T-cell (primary cell): ENCODE measurements at regions of chr22 and their contacts with region 1.

Region 1: GRCh38 chr22:30423982-30424963 is 1.3 kb upstream of the MTFP1 start:
- DNase-seq: peak; percentile 91 to 100 (median 98)
- ATAC-seq: peak; percentile 86 to 92 (median 89)
- H3K4me3 ChIP-seq: peak overlapping the region; percentile 33 to 65
- H3K4me3 Mint-ChIP-seq: peak overlapping the region; percentile 92 to 97 (median 95)
- H3K27ac ChIP-seq: peak overlapping the region; percentile 86
- H3K27ac Mint-ChIP-seq: peak overlapping the region; percentile 96 to 99
- H3K4me1 ChIP-seq: peaks cover 16 to 52% of the 10 kb centered on the region in 2 experiments
- H3K4me1 Mint-ChIP-seq: peaks cover 55 to 61% (median 56%) of the 10 kb centered on the region in 3 donors
- H3K27me3 ChIP-seq: no peaks in the 10 kb centered on the region
- H3K27me3 Mint-ChIP-seq: no peaks in the 10 kb centered on the region

Region 2: GRCh38 chr22:30386960-30387827 is 37.1 kb before region 1 on chr22 and contains the start of gene RNF215:
- CTCF ChIA-PET with region 1: interaction called, 6 to 10 read pairs
- POLR2A ChIA-PET with region 1: no interaction called
- DNase-seq: peak; percentile 41 to 91 (median 68)
- ATAC-seq: peak; percentile 85 to 89 (median 86)
- H3K4me3 ChIP-seq: peak within 1 kb of the TSS; percentile 35 to 53
- H3K4me3 Mint-ChIP-seq: peak within 1 kb of the TSS; percentile 66 to 77 (median 73)
- H3K27ac ChIP-seq: no peak within 1 kb of the TSS
- H3K27ac Mint-ChIP-seq: peak within 1 kb of the TSS; percentile 49 to 68
- H3K4me1 ChIP-seq: peaks cover 3 to 22% of the 10 kb centered on the region in 2 experiments
- H3K4me1 Mint-ChIP-seq: peaks cover 15 to 24% (median 20%) of the 10 kb centered on the region in 3 donors
- H3K27me3 ChIP-seq: peaks cover 0 to 4% of the 10 kb centered on the region in 2 experiments
- H3K27me3 Mint-ChIP-seq: no peaks in the 10 kb centered on the region
- total RNA-seq, gene RNF215: 6.2 to 8.4 (median 6.3) TPM

Region 3: GRCh38 chr22:30396871-30397655 is 27.2 kb before region 1 on chr22 and contains the start of gene SEC14L2:
- CTCF ChIA-PET with region 1: interaction called, 7 to 10 read pairs
- POLR2A ChIA-PET with region 1: interaction called, 9 to 21 read pairs
- DNase-seq: peak; percentile 22 to 72 (median 49)
- ATAC-seq: peak; percentile 65 to 82 (median 78)
- H3K4me3 ChIP-seq: peak within 1 kb of the TSS; percentile 67 to 70
- H3K4me3 Mint-ChIP-seq: peak within 1 kb of the TSS; percentile 83 to 87 (median 86)
- H3K27ac ChIP-seq: peak within 1 kb of the TSS; percentile 34
- H3K27ac Mint-ChIP-seq: peak within 1 kb of the TSS; percentile 84 to 87
- H3K4me1 ChIP-seq: peaks cover 23 to 50% of the 10 kb centered on the region in 2 experiments
- H3K4me1 Mint-ChIP-seq: peaks cover 43 to 48% (median 44%) of the 10 kb centered on the region in 3 donors
- H3K27me3 ChIP-seq: peaks cover 0 to 48% of the 10 kb centered on the region in 2 experiments
- H3K27me3 Mint-ChIP-seq: peaks cover 0 to 7% of the 10 kb centered on the region in 2 donors
- total RNA-seq, gene SEC14L2: 10.9 to 87.9 (median 15.8) TPM

Region 4: GRCh38 chr22:30413745-30414524 is 10.3 kb before region 1 on chr22:
- CTCF ChIA-PET with region 1: interaction called in 1 of 2 experiments, 12 read pairs
- POLR2A ChIA-PET with region 1: interaction called, 14 read pairs
- DNase-seq: peak in 1 of 35 experiments; percentile 21
- ATAC-seq: peak; percentile 76 to 79 (median 78)
- H3K4me3 ChIP-seq: peak overlapping the region in 1 of 2 donors; percentile 49
- H3K4me3 Mint-ChIP-seq: peak overlapping the region; percentile 2 to 29 (median 11)
- H3K27ac ChIP-seq: peak overlapping the region; percentile 62
- H3K27ac Mint-ChIP-seq: peak overlapping the region; percentile 87 to 94
- H3K4me1 ChIP-seq: peaks cover 16 to 31% of the 10 kb centered on the region in 2 experiments
- H3K4me1 Mint-ChIP-seq: peaks cover 35 to 51% (median 37%) of the 10 kb centered on the region in 3 donors
- H3K27me3 ChIP-seq: no peaks in the 10 kb centered on the region
- H3K27me3 Mint-ChIP-seq: no peaks in the 10 kb centered on the region

Region 5: DNA sequence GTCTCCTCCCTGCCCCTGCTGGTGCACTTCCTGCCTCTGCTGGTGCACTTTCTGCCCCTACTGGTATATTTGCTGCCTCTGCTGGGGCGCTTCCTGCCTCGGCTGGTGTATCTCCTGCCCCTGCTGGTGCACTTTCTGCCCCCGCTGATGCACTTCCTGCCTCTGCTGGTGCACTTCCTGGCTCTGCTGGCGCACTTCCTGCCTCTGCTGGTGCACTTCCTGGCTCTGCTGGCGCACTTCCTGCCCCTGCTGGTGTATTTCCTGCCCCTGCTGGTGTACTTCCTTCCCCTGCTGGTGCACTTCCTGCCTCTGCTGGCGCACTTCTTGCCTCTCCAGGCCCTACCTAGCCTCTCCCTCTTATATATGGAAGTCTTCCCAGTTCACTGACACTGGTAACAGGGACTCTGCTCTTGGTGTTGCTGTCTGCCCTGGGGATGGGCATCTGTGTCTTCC is 11.4 kb after region 1 on chr22:
- CTCF ChIA-PET with region 1: interaction called, 8 to 12 read pairs
- POLR2A ChIA-PET with region 1: interaction called, 3 to 9 read pairs
- DNase-seq: peak; percentile 62 to 98 (median 92)
- ATAC-seq: peak; percentile 90 to 95 (median 91)
- H3K4me3 ChIP-seq: peak overlapping the region; percentile 46 to 53
- H3K4me3 Mint-ChIP-seq: peak overlapping the region; percentile 64 to 81 (median 71)
- H3K27ac ChIP-seq: peak overlapping the region; percentile 100
- H3K27ac Mint-ChIP-seq: peak overlapping the region; percentile 93 to 99
- H3K4me1 ChIP-seq: peaks cover 0 to 20% of the 10 kb centered on the region in 2 experiments
- H3K4me1 Mint-ChIP-seq: peaks cover 21 to 27% (median 26%) of the 10 kb centered on the region in 3 donors
- H3K27me3 ChIP-seq: peaks cover 0 to 34% of the 10 kb centered on the region in 2 experiments
- H3K27me3 Mint-ChIP-seq: peaks cover 16 to 24% of the 10 kb centered on the region in 2 donors